ENCODE measurements at regions of chr1 and their contacts with region 1.

Region 1: DNA sequence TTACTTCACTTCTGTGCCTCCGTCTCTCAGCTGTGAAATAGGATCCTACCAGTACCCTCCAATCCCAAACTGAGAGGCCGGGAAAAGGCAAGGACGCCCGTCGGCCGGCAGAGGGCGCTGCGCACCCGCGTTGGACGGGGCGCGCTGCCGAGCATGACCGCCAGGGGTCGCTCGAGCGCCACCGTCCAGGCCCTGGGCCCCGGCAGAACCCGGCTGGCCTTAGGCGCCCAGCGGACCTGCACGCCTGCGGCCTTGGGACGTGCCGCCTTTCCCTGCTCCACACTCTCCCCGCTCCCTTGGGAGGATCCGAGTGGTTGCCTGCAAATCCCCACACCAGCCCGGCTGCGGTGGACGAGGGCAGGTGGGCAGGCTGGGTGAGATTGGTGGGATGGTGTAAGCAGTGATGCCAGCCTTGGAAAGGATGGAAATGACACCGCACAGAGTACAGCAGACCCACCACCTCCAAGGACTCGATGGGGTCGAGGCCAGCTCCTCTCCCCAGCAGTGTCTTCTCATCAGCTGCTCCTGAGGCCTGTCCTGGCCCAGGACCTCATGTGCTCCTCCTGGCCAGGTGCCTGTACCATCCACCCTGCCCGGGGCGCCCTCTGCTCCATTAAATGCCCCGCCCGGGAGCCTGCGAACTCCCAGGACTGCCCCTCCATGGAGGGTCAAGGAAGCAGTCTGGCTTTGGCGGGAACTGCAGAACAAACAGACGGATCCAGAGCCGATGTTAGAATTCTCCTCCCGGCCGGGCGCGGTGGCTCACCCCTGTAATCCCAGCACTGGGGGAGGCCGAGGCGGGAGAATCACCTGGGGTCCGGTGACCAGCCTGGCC is 47.4 kb upstream of the LBR start:
- DNase-seq: peak; percentile 54 to 58
- H3K4me3 ChIP-seq: no peak overlapping the region
- H3K27ac ChIP-seq: no peak overlapping the region
- H3K4me1 ChIP-seq: peaks cover 0 to 3% of the 10 kb centered on the region in 2 donors
- H3K27me3 ChIP-seq: no peaks in the 10 kb centered on the region
- CTCF ChIP-seq: peak; percentile 99 to 100 (median 100)
- POLR2A ChIP-seq: no peak

Region 2: GRCh38 chr1:225526878-225527277 is 51.7 kb after region 1 on chr1:
- intact Hi-C with region 1: no loop called
- DNase-seq: peak; percentile 20 to 31
- H3K4me3 ChIP-seq: no peak overlapping the region
- H3K27ac ChIP-seq: no peak overlapping the region
- H3K4me1 ChIP-seq: no peaks in the 10 kb centered on the region
- H3K27me3 ChIP-seq: no peaks in the 10 kb centered on the region
- CTCF ChIP-seq: no peak
- POLR2A ChIP-seq: no peak

Region 3: DNA sequence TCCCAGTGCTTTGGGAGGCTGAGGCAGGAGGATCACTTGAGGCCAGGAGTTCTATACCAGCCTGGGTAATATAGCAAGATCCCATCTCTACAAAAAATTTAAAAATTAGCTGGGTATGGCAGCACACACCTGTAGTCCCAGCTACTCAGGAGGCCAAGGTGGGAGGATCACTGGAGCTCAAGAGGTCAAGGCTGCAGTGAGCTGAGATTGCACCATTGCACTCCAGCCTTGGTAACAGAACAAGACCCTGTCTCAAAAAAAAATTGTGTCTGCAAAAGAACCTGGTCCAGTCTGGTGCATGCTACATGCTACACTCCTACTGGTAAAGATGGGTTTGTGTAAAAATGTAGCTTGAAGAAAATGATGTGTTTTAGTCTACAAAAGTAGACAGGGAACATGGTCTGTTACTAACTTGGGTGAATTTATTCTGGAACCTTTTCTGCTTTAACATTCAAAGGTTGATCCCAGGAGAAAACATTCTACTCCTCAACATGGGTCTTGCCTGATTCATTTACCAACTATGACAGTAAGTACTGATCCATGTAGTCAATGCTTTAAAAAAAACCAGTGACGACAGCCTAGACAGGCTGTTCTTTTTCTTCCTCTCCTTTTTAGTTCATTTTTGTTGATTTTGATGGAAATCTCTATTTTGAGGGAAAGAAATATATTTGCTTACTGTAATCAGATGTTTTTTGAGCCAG is 210.4 kb after region 1 on chr1:
- intact Hi-C with region 1: no loop called
- DNase-seq: no peak
- H3K4me3 ChIP-seq: no peak overlapping the region
- H3K27ac ChIP-seq: no peak overlapping the region
- H3K4me1 ChIP-seq: no peaks in the 10 kb centered on the region
- H3K27me3 ChIP-seq: no peaks in the 10 kb centered on the region
- CTCF ChIP-seq: no peak
- POLR2A ChIP-seq: no peak

Region 4: DNA sequence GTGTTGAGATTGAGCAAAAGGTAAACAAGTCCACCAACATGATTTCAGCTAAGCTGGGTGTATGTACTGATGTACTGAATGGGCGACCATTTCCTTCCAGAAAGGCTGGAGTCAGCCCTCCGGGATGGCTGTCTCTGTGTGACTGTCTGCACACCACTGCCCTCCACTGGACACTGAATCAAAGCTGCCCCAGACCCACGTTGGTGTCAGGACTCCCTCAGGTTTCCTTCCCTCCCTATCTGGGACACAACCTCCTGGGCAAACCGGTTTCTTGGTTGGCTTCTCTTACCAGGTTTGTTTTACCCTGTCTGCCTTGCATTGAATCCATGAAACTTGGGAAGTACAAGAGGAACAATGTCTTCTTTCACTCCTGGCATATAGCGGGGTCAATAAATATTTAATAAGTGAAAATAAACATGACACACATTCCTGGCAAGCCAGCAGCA is 297.1 kb after region 1 on chr1:
- intact Hi-C with region 1: loop called (anchors 5 kb)
- DNase-seq: peak; percentile 90 to 95
- H3K4me3 ChIP-seq: no peak overlapping the region
- H3K27ac ChIP-seq: peak overlapping the region in 1 of 3 donors; percentile 35
- H3K4me1 ChIP-seq: peaks cover 4 to 22% of the 10 kb centered on the region in 2 donors
- H3K27me3 ChIP-seq: no peaks in the 10 kb centered on the region
- CTCF ChIP-seq: peak; percentile 58 to 98 (median 90)
- POLR2A ChIP-seq: no peak

Region 5: DNA sequence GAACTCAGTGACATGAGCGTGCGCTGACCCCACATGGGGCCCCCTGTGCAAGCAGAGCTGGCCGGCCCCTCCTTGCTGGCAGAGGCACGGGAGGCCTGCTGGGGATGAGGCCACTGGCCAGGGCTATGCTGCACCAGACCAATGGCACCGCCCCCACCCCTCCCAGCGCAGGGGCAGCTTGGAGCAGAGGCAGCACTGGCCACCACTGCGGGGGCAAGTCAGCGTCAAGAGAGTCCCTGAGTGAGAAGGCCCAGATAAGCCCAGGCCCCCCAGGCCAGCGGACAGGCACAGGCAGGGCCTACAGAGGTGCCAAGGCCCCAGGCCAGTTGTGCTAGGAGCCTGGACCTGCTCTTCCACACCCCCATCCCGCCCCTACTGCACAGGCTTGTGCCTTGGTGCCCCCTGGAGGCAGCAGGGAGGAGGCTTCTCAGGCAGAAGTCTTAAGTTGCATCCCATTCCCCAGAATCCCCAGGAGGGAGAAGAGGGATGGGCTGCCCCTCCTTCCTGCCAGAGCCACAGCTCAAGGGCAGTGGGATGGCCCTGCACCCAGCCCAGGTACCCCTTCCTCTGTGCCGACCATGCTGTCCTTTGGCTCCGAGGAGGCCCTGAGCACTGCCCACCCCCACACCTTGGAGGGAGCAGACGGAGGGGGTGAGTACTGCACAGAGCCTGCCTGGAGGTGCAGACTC is 370.5 kb after region 1 on chr1:
- intact Hi-C with region 1: loop called (anchors 10 kb)
- DNase-seq: peak; percentile 74
- H3K4me3 ChIP-seq: no peak overlapping the region
- H3K27ac ChIP-seq: no peak overlapping the region
- H3K4me1 ChIP-seq: no peaks in the 10 kb centered on the region
- H3K27me3 ChIP-seq: no peaks in the 10 kb centered on the region
- CTCF ChIP-seq: peak in 4 of 6 experiments; percentile 53 to 64 (median 60)
- POLR2A ChIP-seq: no peak

Region 6: GRCh38 chr1:225911191-225912130 is 436.3 kb after region 1 on chr1:
- intact Hi-C with region 1: loop called (anchors 2 kb)
- DNase-seq: peak; percentile 54 to 62
- H3K4me3 ChIP-seq: no peak overlapping the region
- H3K27ac ChIP-seq: no peak overlapping the region
- H3K4me1 ChIP-seq: peaks cover 0 to 8% of the 10 kb centered on the region in 2 donors
- H3K27me3 ChIP-seq: no peaks in the 10 kb centered on the region
- CTCF ChIP-seq: peak; percentile 60 to 95 (median 78)
- POLR2A ChIP-seq: no peak

Region 7: GRCh38 chr1:225973158-225973557 is 498.0 kb after region 1 on chr1:
- intact Hi-C with region 1: loop called (anchors 2 kb)
- DNase-seq: no peak
- H3K4me3 ChIP-seq: no peak overlapping the region
- H3K27ac ChIP-seq: no peak overlapping the region
- H3K4me1 ChIP-seq: no peaks in the 10 kb centered on the region
- H3K27me3 ChIP-seq: no peaks in the 10 kb centered on the region
- CTCF ChIP-seq: no peak
- POLR2A ChIP-seq: no peak